AG04450 (cell line): ENCODE measurements at regions of chr2 and their contacts with region 1.

Region 1: GRCh38 chr2:94986392-94986963 is 39.0 kb upstream of the MAL start:
- DNase-seq: peak; percentile 38
- H3K4me3 ChIP-seq: no peak overlapping the region
- H3K27ac ChIP-seq: no peak overlapping the region
- H3K27me3 ChIP-seq: no peaks in the 10 kb centered on the region
- CTCF ChIP-seq: peak; percentile 85

Region 2: DNA sequence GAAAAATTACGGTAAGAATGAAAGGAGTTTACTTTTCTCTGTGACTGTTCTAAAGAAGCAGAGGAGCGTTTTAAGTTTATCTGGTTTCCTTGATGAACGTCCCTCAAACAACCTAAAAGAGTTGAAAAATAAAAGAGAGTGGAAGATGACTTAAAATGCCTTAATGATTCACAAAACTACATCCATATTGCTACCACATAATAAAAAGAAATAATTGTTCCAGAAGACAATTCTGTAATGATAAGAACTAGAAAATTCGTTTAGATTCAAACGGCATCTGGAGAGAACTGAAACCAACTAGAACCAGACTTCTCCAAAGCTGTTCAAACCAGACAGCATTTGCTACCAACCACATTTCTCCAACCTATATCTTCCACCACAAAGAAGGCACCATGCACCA is 47.1 kb before region 1 on chr2:
- CTCF ChIA-PET with region 1: no interaction called
- POLR2A ChIA-PET with region 1: no interaction called
- DNase-seq: no peak
- H3K4me3 ChIP-seq: no peak overlapping the region
- H3K27ac ChIP-seq: no peak overlapping the region
- H3K27me3 ChIP-seq: no peaks in the 10 kb centered on the region
- CTCF ChIP-seq: no peak

Region 3: DNA sequence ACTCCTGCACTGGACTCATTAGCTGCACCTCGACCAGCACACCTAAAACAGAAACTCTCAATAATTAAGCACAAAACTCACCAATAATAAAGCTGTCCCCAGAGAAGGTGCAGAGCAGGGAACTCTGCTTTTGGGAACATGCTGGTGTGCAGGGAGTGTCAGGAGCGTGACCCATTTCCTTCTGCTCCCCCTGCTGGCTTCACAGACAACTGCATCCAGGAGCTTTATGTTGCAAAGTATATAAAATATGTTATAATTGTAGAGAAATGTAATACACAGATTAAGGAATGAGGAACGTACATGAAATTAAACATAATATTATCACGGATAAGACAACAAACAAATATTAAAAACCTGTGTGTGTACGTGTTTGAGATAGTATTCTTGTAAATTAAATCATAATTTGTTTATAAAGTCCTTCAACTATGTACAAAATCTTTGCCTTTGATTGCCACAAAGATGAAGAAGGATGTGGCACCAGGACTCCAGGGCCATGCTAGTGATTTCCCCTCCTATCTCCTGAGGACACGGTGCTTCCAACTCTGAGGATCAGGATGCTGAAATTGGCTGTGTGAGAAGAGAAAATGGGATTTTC is 29.6 kb before region 1 on chr2:
- CTCF ChIA-PET with region 1: interaction called, 12 read pairs
- POLR2A ChIA-PET with region 1: no interaction called
- DNase-seq: no peak
- H3K4me3 ChIP-seq: no peak overlapping the region
- H3K27ac ChIP-seq: no peak overlapping the region
- H3K27me3 ChIP-seq: no peaks in the 10 kb centered on the region
- CTCF ChIP-seq: peak; percentile 89

Region 4: GRCh38 chr2:95115418-95115817 is 128.9 kb after region 1 on chr2:
- CTCF ChIA-PET with region 1: interaction called, 21 read pairs
- POLR2A ChIA-PET with region 1: no interaction called
- DNase-seq: peak; percentile 21
- H3K4me3 ChIP-seq: no peak overlapping the region
- H3K27ac ChIP-seq: no peak overlapping the region
- H3K27me3 ChIP-seq: no peaks in the 10 kb centered on the region
- CTCF ChIP-seq: peak; percentile 89